AG04450 (cell line): ENCODE measurements at regions of chr14 and their contacts with region 1.

Region 1: GRCh38 chr14:28751467-28752058 is 15.0 kb upstream of the FOXG1 start:
- DNase-seq: no peak
- H3K4me3 ChIP-seq: no peak overlapping the region
- H3K27ac ChIP-seq: no peak overlapping the region
- H3K27me3 ChIP-seq: peaks cover 15% of the 10 kb centered on the region
- CTCF ChIP-seq: peak; percentile 80

Region 2: GRCh38 chr14:28764257-28765160 is 12.9 kb after region 1 on chr14:
- CTCF ChIA-PET with region 1: interaction called, 13 read pairs
- POLR2A ChIA-PET with region 1: no interaction called
- DNase-seq: no peak
- H3K4me3 ChIP-seq: no peak overlapping the region
- H3K27ac ChIP-seq: no peak overlapping the region
- H3K27me3 ChIP-seq: peaks cover 78% of the 10 kb centered on the region
- CTCF ChIP-seq: no peak

Region 3: GRCh38 chr14:28837529-28837928 is 86.0 kb after region 1 on chr14:
- CTCF ChIA-PET with region 1: no interaction called
- POLR2A ChIA-PET with region 1: no interaction called
- DNase-seq: no peak
- H3K4me3 ChIP-seq: no peak overlapping the region
- H3K27ac ChIP-seq: no peak overlapping the region
- H3K27me3 ChIP-seq: no peaks in the 10 kb centered on the region
- CTCF ChIP-seq: no peak

Region 4: DNA sequence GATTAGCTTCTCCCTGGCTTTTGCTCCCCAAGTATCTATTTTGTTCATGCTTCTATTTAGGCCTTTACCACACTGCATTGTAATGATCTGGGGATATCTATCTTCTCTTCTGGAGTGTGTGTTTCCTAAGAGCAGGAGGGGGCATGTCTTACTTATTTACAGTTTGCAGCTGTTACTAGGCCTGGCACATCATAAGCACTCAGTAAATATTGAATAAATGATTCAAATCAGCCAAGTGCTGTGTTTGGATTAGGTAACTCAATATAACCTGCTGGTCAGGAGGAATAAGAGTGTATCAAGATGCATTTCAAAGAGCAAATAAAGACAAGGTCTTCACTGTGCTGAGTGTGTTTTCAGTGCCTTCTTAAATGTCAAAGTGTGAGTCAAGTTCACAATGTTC is 201.1 kb after region 1 on chr14:
- CTCF ChIA-PET with region 1: no interaction called
- POLR2A ChIA-PET with region 1: no interaction called
- DNase-seq: no peak
- H3K4me3 ChIP-seq: no peak overlapping the region
- H3K27ac ChIP-seq: no peak overlapping the region
- H3K27me3 ChIP-seq: no peaks in the 10 kb centered on the region
- CTCF ChIP-seq: no peak

Region 5: DNA sequence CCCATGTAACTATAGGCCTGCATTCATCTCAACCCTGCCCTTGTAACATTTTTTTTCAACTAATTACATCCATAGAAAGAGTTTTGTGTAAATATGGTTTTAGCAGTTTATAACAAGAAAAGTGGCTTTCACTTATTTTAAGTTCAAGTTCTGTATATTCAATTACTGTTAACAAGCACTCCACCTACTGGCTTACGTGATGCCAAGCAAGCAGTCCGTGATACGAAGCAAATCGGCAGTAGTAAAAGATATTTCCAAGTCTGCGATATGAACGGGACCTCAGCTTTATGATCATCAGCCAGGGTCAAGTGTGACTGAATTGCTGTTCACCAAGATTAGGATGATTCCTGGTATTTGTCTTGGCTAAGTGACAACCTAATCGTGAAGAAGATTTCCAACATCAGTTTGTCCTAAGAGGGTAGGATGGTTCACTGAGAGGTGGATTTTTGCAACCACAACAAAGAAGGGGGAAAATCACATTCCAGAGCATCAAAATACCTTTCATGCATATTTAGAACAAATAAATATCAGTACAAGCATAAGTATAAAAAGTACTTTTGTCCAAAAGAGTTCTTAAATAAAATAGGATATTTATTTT is 471.2 kb after region 1 on chr14:
- CTCF ChIA-PET with region 1: interaction called, 40 read pairs
- POLR2A ChIA-PET with region 1: no interaction called
- DNase-seq: peak; percentile 41
- H3K4me3 ChIP-seq: 0 out of 2 replicates have a peak overlapping the region, but pooled peaks have one; percentile 5
- H3K27ac ChIP-seq: no peak overlapping the region
- H3K27me3 ChIP-seq: no peaks in the 10 kb centered on the region
- CTCF ChIP-seq: peak; percentile 88

Region 6: GRCh38 chr14:29521526-29522137 is 770.1 kb after region 1 on chr14:
- CTCF ChIA-PET with region 1: interaction called, 79 read pairs
- POLR2A ChIA-PET with region 1: no interaction called
- DNase-seq: no peak
- H3K4me3 ChIP-seq: no peak overlapping the region
- H3K27ac ChIP-seq: no peak overlapping the region
- H3K27me3 ChIP-seq: no peaks in the 10 kb centered on the region
- CTCF ChIP-seq: peak; percentile 44

Region 7: DNA sequence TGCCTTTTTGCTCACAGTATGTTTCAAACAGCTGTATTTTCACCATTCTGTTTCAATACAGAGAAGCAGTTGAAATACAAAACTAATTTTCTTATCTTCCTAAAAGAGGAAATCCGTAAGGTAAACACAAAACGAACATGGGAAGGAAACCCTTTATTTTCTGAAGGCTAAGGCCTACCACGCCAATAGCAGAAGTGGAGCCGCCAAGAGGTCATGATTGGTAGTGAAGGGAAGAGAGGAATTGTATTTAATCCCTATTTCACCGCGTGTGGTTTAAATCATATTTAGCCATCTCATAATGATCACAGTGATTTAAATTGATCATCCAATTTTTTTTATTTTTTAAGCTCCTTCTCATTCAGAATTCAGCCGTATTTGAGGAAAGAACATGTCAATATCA is 777.9 kb after region 1 on chr14:
- CTCF ChIA-PET with region 1: interaction called, 101 read pairs
- POLR2A ChIA-PET with region 1: no interaction called
- DNase-seq: no peak
- H3K4me3 ChIP-seq: no peak overlapping the region
- H3K27ac ChIP-seq: no peak overlapping the region
- H3K27me3 ChIP-seq: no peaks in the 10 kb centered on the region
- CTCF ChIP-seq: peak; percentile 54

Region 8: GRCh38 chr14:29536886-29537511 is 785.4 kb after region 1 on chr14:
- CTCF ChIA-PET with region 1: interaction called, 101 read pairs
- POLR2A ChIA-PET with region 1: interaction called, 3 read pairs
- DNase-seq: no peak
- H3K4me3 ChIP-seq: no peak overlapping the region
- H3K27ac ChIP-seq: no peak overlapping the region
- H3K27me3 ChIP-seq: no peaks in the 10 kb centered on the region
- CTCF ChIP-seq: peak; percentile 59